CD4-positive, alpha-beta T cell (primary cell): ENCODE measurements at regions of chr1 and their contacts with region 1.

Region 1: DNA sequence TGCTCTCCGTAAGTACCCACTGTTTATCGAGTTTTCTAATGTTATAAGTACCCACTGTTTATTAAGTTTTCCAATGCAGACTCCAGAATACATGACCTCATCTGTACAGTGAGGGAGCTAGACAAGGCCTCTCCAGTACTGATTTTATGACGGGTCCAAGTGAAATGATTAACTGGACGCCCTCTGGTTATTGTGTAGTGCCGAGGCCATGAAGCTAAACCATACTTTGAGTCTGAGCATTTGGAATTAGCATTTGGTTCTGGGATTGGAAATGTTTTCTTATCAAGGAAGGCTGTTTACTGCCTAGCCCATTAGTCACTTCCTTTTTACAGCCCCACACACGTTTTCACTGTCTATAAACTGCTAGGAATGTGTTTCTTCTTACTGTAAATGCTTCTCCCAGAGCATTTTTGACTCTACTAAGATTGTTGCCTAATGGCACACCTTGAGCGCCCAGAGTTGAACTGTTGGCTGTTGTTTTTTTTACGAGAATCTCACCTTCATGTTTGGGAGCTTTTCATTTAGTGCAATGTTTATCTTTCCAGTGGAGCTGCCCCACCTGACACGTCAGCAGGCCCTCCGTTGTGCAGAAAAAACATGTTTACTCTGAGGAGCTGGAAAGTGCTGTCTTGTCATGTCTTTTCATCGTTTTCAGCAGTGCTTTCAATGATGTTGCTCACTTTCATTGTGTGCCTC is 26.9 kb downstream of the SPATA46 start:
- DNase-seq: no peak
- ATAC-seq: no peak
- H3K4me3 ChIP-seq: no peak overlapping the region
- H3K4me3 Mint-ChIP-seq: no peak overlapping the region
- H3K27ac ChIP-seq: no peak overlapping the region
- H3K27ac Mint-ChIP-seq: no peak overlapping the region
- H3K4me1 ChIP-seq: no peaks in the 10 kb centered on the region
- H3K4me1 Mint-ChIP-seq: no peaks in the 10 kb centered on the region
- H3K27me3 ChIP-seq: peaks cover 0 to 3% of the 10 kb centered on the region in 2 experiments
- H3K27me3 Mint-ChIP-seq: peaks cover 5% of the 10 kb centered on the region
- CTCF ChIP-seq: no peak

Region 2: DNA sequence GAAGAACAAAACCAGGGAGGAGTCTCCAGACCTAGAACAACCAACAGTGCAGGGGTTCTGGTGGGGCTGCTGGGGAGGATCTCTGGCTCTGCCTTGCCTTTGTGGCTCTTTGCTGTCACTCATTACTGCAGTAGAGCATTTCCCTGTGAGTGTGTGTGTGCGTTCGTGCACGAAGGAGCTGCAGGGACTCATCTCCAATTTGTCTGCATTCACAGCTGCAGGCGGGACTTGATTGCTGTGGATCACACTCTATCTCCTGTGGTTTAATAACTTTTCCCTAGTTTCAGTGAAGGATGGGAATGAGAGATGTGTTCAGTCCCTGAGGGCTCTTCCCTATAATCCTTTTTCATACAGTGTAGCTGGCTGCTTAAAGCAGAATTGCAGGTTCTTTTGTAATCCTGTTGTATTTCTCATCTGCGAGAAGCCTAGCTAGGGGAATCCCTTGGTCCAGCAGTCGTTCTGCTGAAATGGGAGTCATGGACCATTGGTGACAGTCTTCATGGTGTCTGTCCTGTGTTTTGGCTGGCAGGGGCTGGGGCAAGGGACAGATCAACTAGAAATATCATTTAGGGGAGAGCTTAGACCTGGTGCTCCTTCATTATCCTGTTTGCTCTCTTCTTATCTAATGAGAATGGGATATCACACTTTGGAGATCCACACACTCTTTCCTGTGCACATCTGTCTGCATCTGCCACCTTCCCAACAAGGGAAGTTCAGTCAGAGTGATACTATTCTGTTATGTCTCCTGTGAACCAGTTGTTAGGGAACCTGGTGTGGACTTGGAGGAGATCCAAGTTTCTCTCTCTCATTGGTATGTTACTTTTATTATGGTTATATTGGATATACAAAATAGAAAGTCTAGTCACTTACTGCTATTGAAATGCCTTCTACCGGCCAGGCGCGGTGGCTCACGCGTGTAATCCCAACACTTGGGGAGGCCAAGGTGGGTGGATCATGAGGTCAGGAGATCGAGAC is 1088.2 kb before region 1 on chr1:
- CTCF ChIA-PET with region 1: no interaction called
- POLR2A ChIA-PET with region 1: no interaction called
- intact Hi-C with region 1: no loop called
- DNase-seq: peak in 1 of 14 experiments; percentile 6
- ATAC-seq: no peak
- H3K4me3 ChIP-seq: no peak overlapping the region
- H3K4me3 Mint-ChIP-seq: no peak overlapping the region
- H3K27ac ChIP-seq: no peak overlapping the region
- H3K27ac Mint-ChIP-seq: no peak overlapping the region
- H3K4me1 ChIP-seq: peaks cover 17% of the 10 kb centered on the region
- H3K4me1 Mint-ChIP-seq: peaks cover 5% of the 10 kb centered on the region
- H3K27me3 ChIP-seq: peaks cover 44 to 51% of the 10 kb centered on the region in 2 experiments
- H3K27me3 Mint-ChIP-seq: peaks cover 69% of the 10 kb centered on the region
- CTCF ChIP-seq: no peak

Region 3: DNA sequence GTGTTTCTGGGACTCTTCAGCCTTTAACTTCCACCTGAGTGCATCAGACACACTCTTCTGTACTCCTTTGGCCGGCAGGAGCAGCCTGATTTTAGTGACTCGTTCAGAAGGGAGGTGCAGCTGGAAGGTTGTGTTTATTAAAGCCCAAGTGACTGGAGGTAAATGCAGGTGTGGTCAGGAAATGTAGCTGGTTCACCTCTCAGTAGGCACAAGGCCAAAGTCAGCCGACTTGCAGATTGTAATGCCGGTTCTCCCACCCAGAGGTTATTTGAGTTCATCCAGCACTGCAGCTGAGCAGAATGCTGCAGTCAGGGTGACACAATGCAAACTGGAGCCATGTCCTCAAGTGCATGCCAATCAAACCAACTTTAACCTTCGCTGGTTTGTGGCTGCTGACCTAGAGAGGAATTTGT is 64.6 kb before region 1 on chr1:
- CTCF ChIA-PET with region 1: no interaction called
- POLR2A ChIA-PET with region 1: no interaction called
- intact Hi-C with region 1: loop called in 1 of 2 experiments (anchors 10 kb)
- DNase-seq: no peak
- ATAC-seq: no peak
- H3K4me3 ChIP-seq: no peak overlapping the region
- H3K4me3 Mint-ChIP-seq: no peak overlapping the region
- H3K27ac ChIP-seq: no peak overlapping the region
- H3K27ac Mint-ChIP-seq: no peak overlapping the region
- H3K4me1 ChIP-seq: no peaks in the 10 kb centered on the region
- H3K4me1 Mint-ChIP-seq: no peaks in the 10 kb centered on the region
- H3K27me3 ChIP-seq: peaks cover 0 to 10% of the 10 kb centered on the region in 2 experiments
- H3K27me3 Mint-ChIP-seq: peaks cover 50% of the 10 kb centered on the region
- CTCF ChIP-seq: no peak

Region 4: DNA sequence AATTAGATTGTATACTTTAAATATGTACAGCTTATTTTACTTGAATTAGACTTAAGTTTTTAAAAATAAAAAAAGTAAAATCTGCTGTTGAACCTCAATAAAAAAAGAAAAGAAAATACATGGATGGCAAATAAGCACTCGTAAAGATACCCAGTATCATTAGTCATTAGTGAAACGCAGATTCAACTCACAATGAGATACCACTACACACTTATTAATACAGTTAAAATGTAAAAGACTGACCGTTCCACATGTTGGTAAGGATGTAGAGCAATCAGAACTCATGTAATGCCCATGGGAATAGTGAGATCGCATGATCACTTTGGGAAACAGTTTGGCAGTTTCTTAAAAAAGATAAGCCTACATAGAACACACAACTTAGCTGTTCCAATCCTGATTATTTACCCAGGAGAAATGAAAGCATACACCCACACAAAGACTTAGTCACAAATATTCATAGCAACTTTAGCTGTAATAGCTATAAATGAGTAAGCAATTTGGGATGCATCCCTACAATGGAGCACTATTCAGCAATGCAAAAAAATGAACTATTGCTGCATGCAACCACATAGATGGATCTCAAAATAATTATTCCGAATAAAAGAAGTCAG is 54.9 kb after region 1 on chr1:
- CTCF ChIA-PET with region 1: no interaction called
- POLR2A ChIA-PET with region 1: no interaction called
- intact Hi-C with region 1: loop called in 1 of 2 experiments (anchors 2 kb)
- DNase-seq: no peak
- ATAC-seq: no peak
- H3K4me3 ChIP-seq: no peak overlapping the region
- H3K4me3 Mint-ChIP-seq: no peak overlapping the region
- H3K27ac ChIP-seq: no peak overlapping the region
- H3K27ac Mint-ChIP-seq: no peak overlapping the region
- H3K4me1 ChIP-seq: no peaks in the 10 kb centered on the region
- H3K4me1 Mint-ChIP-seq: no peaks in the 10 kb centered on the region
- H3K27me3 ChIP-seq: no peaks in the 10 kb centered on the region
- H3K27me3 Mint-ChIP-seq: peaks cover 21% of the 10 kb centered on the region
- CTCF ChIP-seq: no peak